CD4-positive, alpha-beta T cell (primary cell): ENCODE measurements at regions of chr17 and their contacts with region 1.

Region 1: DNA sequence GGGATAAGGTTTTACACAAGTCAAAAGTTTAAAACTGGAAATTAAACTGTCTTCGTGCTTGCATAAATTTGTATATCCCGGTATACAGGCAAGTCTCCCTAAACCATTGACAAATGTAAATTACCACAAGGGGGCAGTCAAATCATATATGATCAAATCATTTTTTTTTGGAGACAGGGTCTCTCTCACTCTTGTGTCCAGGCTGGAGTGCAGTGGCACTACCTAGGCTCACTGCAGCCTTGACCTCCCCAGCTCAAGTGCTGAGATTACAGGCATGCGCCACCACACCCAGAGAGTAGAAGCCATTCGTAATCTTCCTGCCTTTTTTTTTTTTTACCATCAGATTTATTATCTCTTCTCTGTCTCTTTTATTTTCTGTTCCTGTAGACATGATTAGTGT is 18.5 kb downstream of the TOP2A start:
- DNase-seq: peak in 5 of 14 experiments; percentile 7 to 80 (median 52)
- ATAC-seq: peak; percentile 71
- H3K4me3 ChIP-seq: no peak overlapping the region
- H3K4me3 Mint-ChIP-seq: no peak overlapping the region
- H3K27ac ChIP-seq: no peak overlapping the region
- H3K27ac Mint-ChIP-seq: no peak overlapping the region
- H3K4me1 ChIP-seq: peaks cover 3% of the 10 kb centered on the region
- H3K4me1 Mint-ChIP-seq: peaks cover 22% of the 10 kb centered on the region
- H3K27me3 ChIP-seq: no peaks in the 10 kb centered on the region
- H3K27me3 Mint-ChIP-seq: no peaks in the 10 kb centered on the region
- CTCF ChIP-seq: peak; percentile 91

Region 2: GRCh38 chr17:40086150-40087044 is 312.8 kb before region 1 on chr17:
- CTCF ChIA-PET with region 1: no interaction called
- POLR2A ChIA-PET with region 1: no interaction called
- intact Hi-C with region 1: no loop called
- DNase-seq: peak; percentile 46 to 78 (median 59)
- ATAC-seq: peak; percentile 68
- H3K4me3 ChIP-seq: no peak overlapping the region
- H3K4me3 Mint-ChIP-seq: no peak overlapping the region
- H3K27ac ChIP-seq: no peak overlapping the region
- H3K27ac Mint-ChIP-seq: no peak overlapping the region
- H3K4me1 ChIP-seq: peaks cover 9% of the 10 kb centered on the region
- H3K4me1 Mint-ChIP-seq: peaks cover 15% of the 10 kb centered on the region
- H3K27me3 ChIP-seq: no peaks in the 10 kb centered on the region
- H3K27me3 Mint-ChIP-seq: no peaks in the 10 kb centered on the region
- CTCF ChIP-seq: peak; percentile 89

Region 3: GRCh38 chr17:40317880-40318829 is 81.0 kb before region 1 on chr17:
- CTCF ChIA-PET with region 1: no interaction called
- POLR2A ChIA-PET with region 1: no interaction called
- intact Hi-C with region 1: no loop called
- DNase-seq: peak; percentile 81 to 95 (median 90)
- ATAC-seq: peak; percentile 61
- H3K4me3 ChIP-seq: peak overlapping the region; percentile 96
- H3K4me3 Mint-ChIP-seq: peak overlapping the region; percentile 95
- H3K27ac ChIP-seq: peak overlapping the region; percentile 99
- H3K27ac Mint-ChIP-seq: peak overlapping the region; percentile 99
- H3K4me1 ChIP-seq: peaks cover 85% of the 10 kb centered on the region
- H3K4me1 Mint-ChIP-seq: peaks cover 84% of the 10 kb centered on the region
- H3K27me3 ChIP-seq: no peaks in the 10 kb centered on the region
- H3K27me3 Mint-ChIP-seq: no peaks in the 10 kb centered on the region
- CTCF ChIP-seq: no peak

Region 4: GRCh38 chr17:40443583-40444327 is 44.6 kb after region 1 on chr17:
- CTCF ChIA-PET with region 1: interaction called, 4 read pairs
- POLR2A ChIA-PET with region 1: no interaction called
- intact Hi-C with region 1: loop called (anchors 2 to 5 kb)
- DNase-seq: peak; percentile 41 to 84 (median 66)
- ATAC-seq: peak; percentile 76
- H3K4me3 ChIP-seq: peak overlapping the region; percentile 62
- H3K4me3 Mint-ChIP-seq: peak overlapping the region; percentile 89
- H3K27ac ChIP-seq: no peak overlapping the region
- H3K27ac Mint-ChIP-seq: peak overlapping the region; percentile 85
- H3K4me1 ChIP-seq: peaks cover 46% of the 10 kb centered on the region
- H3K4me1 Mint-ChIP-seq: peaks cover 37% of the 10 kb centered on the region
- H3K27me3 ChIP-seq: no peaks in the 10 kb centered on the region
- H3K27me3 Mint-ChIP-seq: peaks cover 6% of the 10 kb centered on the region
- CTCF ChIP-seq: peak; percentile 63

Region 5: DNA sequence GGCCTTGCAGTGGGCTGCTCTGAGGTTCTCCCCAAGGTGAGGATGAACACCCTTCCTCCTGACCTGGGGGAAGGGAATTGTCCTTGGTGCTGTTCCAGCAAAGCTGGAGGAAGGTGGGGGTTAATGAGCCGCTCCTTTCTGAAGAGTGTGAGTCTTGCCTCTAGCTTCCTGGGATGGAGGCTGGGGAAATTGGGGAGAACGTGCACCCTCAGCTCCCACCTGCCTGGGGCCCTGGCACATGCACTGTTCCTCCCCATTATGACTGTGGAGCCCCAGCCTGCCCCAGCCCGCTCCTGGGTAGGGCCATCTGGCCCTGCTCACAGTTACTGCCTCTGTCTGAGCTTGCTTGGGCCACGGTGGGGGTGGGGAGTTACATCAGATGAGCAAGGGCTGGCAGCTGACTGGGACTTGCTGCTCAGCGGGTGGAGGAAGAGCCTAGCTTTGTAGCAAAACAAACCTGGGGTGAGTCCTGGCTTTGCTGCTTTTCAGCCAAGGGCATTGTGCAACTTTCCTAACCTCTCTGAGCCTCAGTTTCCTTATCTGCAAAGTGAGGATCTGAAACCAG is 91.2 kb after region 1 on chr17:
- CTCF ChIA-PET with region 1: no interaction called
- POLR2A ChIA-PET with region 1: no interaction called
- intact Hi-C with region 1: no loop called
- DNase-seq: peak in 4 of 14 experiments; percentile 11 to 48 (median 26)
- ATAC-seq: no peak
- H3K4me3 ChIP-seq: no peak overlapping the region
- H3K4me3 Mint-ChIP-seq: peak overlapping the region; percentile 48
- H3K27ac ChIP-seq: no peak overlapping the region
- H3K27ac Mint-ChIP-seq: peak overlapping the region; percentile 49
- H3K4me1 ChIP-seq: peaks cover 47% of the 10 kb centered on the region
- H3K4me1 Mint-ChIP-seq: peaks cover 62% of the 10 kb centered on the region
- H3K27me3 ChIP-seq: no peaks in the 10 kb centered on the region
- H3K27me3 Mint-ChIP-seq: no peaks in the 10 kb centered on the region
- CTCF ChIP-seq: no peak